Uterus (tissue), 4 donors: ENCODE measurements at regions of chr6 and their contacts with region 1.

Region 1: GRCh38 chr6:38209371-38210260 is 390.1 kb downstream of the ZFAND3 start:
- DNase-seq: no peak
- H3K4me3 ChIP-seq: no peak overlapping the region
- H3K27ac ChIP-seq: no peak overlapping the region
- H3K4me1 ChIP-seq: no peaks in the 10 kb centered on the region
- H3K27me3 ChIP-seq: no peaks in the 10 kb centered on the region
- CTCF ChIP-seq: no peak
- POLR2A ChIP-seq: no peak

Region 2: GRCh38 chr6:38262026-38262425 is 52.4 kb after region 1 on chr6:
- intact Hi-C with region 1: no loop called
- DNase-seq: no peak
- H3K4me3 ChIP-seq: no peak overlapping the region
- H3K27ac ChIP-seq: peak overlapping the region in 1 of 2 donors; percentile 3
- H3K4me1 ChIP-seq: no peaks in the 10 kb centered on the region
- H3K27me3 ChIP-seq: no peaks in the 10 kb centered on the region
- CTCF ChIP-seq: no peak
- POLR2A ChIP-seq: no peak

Region 3: GRCh38 chr6:38320843-38321242 is 111.2 kb after region 1 on chr6:
- intact Hi-C with region 1: loop called (anchors 5 kb)
- DNase-seq: no peak
- H3K4me3 ChIP-seq: no peak overlapping the region
- H3K27ac ChIP-seq: no peak overlapping the region
- H3K4me1 ChIP-seq: no peaks in the 10 kb centered on the region
- H3K27me3 ChIP-seq: no peaks in the 10 kb centered on the region
- CTCF ChIP-seq: no peak
- POLR2A ChIP-seq: no peak